ENCODE measurements at regions of chr22 and their contacts with region 1.

Region 1: DNA sequence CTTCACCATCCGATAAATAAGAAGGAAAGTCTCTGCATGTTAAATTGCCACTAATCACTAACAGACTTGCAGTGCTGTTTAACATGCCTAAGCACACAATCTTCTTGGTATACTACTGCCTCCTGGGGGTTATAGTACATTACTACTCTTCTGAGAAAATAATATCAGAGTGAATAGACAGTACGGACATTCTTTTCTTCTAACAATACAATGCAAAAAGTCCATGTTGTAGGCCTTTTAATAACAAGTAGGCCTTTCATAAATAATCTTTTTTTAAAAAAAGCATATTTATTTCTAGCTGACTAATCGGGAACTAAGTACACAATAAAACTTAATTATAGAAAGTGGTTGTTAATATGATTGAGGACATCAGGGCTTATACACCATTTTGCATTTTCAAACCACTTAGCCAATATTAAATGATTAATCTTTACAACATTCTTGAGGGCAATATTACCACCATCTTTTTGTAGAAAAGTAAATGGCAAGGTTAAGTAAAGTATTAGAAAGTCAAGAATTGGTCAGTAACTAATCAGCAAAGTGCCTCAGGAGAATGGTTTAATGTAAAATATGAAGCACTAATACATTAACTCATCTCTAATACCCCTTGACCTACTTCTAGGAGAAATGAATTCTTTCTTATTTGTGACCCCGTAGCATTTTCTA is 84.7 kb downstream of the TTC28 start:
- DNase-seq: peak; percentile 38
- ATAC-seq: peak; percentile 43
- H3K4me3 ChIP-seq: no peak overlapping the region
- H3K4me3 Mint-ChIP-seq: no peak overlapping the region
- H3K27ac ChIP-seq: no peak overlapping the region
- H3K27ac Mint-ChIP-seq: no peak overlapping the region
- H3K4me1 ChIP-seq: no peaks in the 10 kb centered on the region
- H3K4me1 Mint-ChIP-seq: no peaks in the 10 kb centered on the region
- H3K27me3 ChIP-seq: no peaks in the 10 kb centered on the region
- H3K27me3 Mint-ChIP-seq: no peaks in the 10 kb centered on the region
- CTCF ChIP-seq: peak; percentile 89

Region 2: DNA sequence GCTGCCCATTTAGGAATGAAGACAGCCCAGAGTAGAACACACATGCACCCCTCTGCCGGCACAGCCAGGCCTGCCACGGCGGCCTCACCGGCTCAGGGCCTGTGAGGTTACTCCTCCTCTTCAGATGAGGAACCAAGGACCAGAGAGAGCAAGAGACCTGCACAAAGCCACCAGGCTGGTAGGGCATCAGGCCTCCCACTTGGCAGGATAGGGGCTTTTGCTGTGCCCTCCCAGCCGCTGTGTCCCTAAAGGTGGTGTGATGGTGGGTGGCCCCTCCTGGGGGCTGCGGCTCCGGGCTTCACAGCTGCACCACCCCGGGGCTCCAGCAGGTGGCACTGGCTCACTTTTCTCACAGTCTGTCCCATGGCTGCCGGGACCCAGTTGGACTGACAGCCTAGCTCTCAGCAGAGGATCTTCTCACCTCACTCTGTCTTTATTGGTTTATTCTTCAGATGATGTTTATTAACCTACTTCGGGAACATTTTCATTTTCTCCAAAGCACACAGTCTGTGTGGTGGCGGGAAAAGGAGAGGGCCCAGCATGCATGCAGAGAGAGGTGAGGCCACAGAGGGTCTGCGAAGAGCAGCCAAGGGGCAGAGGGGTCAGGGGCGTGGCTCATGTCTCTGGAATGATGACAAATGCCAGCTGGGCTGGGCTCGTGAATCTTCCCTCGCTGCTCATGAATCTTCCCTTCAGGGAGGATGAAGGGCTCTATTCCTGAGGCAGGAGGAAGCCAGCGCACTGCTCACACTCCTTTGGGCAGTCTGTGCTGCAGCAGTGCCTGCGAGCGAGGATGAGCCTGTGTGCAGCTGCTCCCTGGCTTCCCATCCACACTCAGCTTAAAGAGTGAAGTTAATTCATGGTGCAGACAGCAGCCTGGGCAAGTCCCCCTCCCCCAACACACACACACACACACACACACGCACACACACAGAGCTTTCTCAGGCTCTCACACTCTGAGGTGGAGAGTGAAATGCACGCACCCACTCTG is 574.8 kb before region 1 on chr22:
- CTCF ChIA-PET with region 1: interaction called, 13 read pairs
- POLR2A ChIA-PET with region 1: no interaction called
- intact Hi-C with region 1: no loop called
- DNase-seq: peak; percentile 67
- ATAC-seq: peak; percentile 80
- H3K4me3 ChIP-seq: no peak overlapping the region
- H3K4me3 Mint-ChIP-seq: no peak overlapping the region
- H3K27ac ChIP-seq: no peak overlapping the region
- H3K27ac Mint-ChIP-seq: no peak overlapping the region
- H3K4me1 ChIP-seq: no peaks in the 10 kb centered on the region
- H3K4me1 Mint-ChIP-seq: peaks cover 2% of the 10 kb centered on the region
- H3K27me3 ChIP-seq: no peaks in the 10 kb centered on the region
- H3K27me3 Mint-ChIP-seq: no peaks in the 10 kb centered on the region
- CTCF ChIP-seq: peak; percentile 91